Heart right ventricle (tissue), 16 donors: ENCODE measurements at regions of chr10 and their contacts with region 1.

Region 1: DNA sequence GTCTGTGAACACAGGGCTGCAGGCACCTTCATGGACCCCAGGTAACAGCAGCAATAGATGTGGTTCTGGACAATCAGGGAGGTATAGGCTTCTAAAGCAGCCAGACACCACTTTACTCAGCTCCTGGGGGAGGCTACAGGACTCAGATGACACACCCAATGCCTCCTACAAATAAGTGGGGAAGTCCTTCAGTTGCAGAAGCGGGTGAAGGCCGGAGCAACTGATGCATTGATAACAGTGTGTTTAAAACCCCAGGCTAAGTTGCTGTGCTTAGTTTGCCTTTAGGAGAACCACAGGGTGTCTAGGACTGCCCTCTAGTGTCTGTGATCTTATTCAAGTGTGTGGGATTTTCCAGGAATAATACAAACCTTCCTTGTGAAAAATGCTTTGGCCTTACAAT is 5.9 kb upstream of the ITGA8 start:
- DNase-seq: no peak
- ATAC-seq: peak in 7 of 8 donors; percentile 51 to 82 (median 64)
- H3K4me3 ChIP-seq: no peak overlapping the region
- H3K27ac ChIP-seq: no peak overlapping the region
- H3K4me1 ChIP-seq: no peaks in the 10 kb centered on the region
- H3K27me3 ChIP-seq: peaks cover 0 to 16% (median 11%) of the 10 kb centered on the region in 7 donors
- CTCF ChIP-seq: peak; percentile 32 to 72 (median 54)

Region 2: GRCh38 chr10:15433850-15434537 is 291.6 kb before region 1 on chr10:
- intact Hi-C with region 1: loop called in 9 of 10 experiments (anchors 2 to 5 kb)
- DNase-seq: peak in 1 of 2 donors; percentile 57
- ATAC-seq: peak in 7 of 8 donors; percentile 38 to 87 (median 70)
- H3K4me3 ChIP-seq: peak overlapping the region in 7 of 10 donors; percentile 24 to 49 (median 41)
- H3K27ac ChIP-seq: no peak overlapping the region
- H3K4me1 ChIP-seq: peaks cover 0 to 7% (median 2%) of the 10 kb centered on the region in 9 donors
- H3K27me3 ChIP-seq: peaks cover 0 to 5% (median 0%) of the 10 kb centered on the region in 7 donors
- CTCF ChIP-seq: peak; percentile 69 to 86 (median 79)

Region 3: DNA sequence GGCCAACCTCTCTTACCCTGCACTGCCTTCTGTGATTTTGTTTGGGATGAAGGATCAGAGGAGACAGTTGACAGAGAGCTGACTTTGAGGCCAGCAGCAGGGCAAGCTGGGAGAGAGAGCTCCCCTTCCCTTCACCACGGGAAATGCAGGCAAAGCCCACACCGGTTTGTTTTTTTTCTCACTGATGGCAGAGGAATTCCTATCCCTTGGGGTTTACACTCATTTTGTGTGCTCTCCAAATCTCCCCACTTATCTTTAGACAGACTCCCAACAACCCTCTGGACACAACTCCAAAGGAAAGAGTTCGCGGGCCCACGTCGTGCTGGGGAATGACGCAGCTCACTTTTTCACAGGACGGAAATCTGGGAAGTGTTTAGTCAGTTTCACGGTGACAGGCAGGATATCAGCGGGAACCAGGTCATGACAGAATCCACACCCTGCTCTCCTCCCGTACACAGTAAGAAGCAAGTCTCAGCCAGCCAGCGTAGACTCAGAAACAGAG is 286.2 kb before region 1 on chr10:
- intact Hi-C with region 1: loop called in 7 of 10 experiments (anchors 2 to 5 kb)
- DNase-seq: peak; percentile 52 to 81
- ATAC-seq: peak; percentile 80 to 96 (median 93)
- H3K4me3 ChIP-seq: peak overlapping the region in 9 of 10 donors; percentile 1 to 49 (median 35)
- H3K27ac ChIP-seq: peak overlapping the region; percentile 47 to 83 (median 62)
- H3K4me1 ChIP-seq: peaks cover 0 to 20% (median 13%) of the 10 kb centered on the region in 9 donors
- H3K27me3 ChIP-seq: no peaks in the 10 kb centered on the region
- CTCF ChIP-seq: peak in 6 of 9 donors; percentile 19 to 53 (median 43)